ENCODE measurements at regions of chr17 and their contacts with region 1.

Region 1: DNA sequence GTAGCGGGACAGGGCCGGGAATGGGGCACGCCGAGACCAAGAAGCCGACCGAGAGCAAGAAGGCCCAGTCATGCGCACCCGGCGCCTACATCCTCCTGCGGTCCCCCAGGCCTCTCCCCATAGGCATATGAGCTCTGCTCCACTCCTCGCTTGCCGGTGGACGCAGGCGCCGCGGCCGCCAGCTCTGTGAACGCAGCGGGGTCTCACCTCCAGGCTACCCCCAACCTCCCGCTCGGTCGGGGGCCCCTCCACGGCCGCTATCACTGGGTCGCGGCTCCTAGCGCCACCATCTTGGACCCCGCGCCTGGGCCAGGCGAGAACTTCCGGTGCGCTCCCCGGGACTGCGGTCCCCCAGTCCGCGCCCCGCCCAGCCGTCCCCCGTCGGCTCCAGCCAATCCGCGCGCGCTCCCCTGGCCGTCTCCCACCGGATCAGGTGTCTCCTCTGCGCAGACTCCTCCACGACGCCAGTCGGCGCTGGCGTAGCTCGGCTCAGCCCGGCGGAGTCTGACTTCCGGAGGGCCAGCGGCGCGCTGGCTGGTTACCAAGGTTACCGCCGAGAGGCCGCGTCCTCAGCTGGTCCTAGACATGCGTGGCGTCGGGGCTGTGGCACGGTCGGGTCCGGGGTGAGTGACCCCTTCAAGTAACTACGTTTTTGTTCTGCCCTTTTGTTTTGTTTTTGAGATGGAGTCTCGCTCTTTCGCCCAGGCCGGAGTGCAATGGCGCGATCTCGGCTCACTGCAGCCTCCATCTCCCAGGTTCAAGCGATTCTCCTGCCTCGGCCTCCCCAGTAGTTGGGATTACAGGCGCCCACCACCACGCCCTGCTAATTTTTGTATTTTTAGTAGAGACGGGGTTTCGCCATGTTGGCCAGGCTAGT is at the start of gene ZNF594:
- DNase-seq: peak; percentile 96 to 98
- ATAC-seq: peak; percentile 99 to 100 (median 100)
- H3K4me3 ChIP-seq: peak within 1 kb of the TSS; percentile 71 to 95 (median 90)
- H3K27ac ChIP-seq: peak within 1 kb of the TSS; percentile 24 to 89 (median 83)
- H3K4me1 ChIP-seq: peaks cover 0 to 26% (median 19%) of the 10 kb centered on the region in 9 donors
- H3K27me3 ChIP-seq: no peaks in the 10 kb centered on the region
- CTCF ChIP-seq: peak; percentile 50 to 91 (median 80)
- total RNA-seq, gene ZNF594: 4.0 to 9.1 (median 6.7) TPM

Region 2: DNA sequence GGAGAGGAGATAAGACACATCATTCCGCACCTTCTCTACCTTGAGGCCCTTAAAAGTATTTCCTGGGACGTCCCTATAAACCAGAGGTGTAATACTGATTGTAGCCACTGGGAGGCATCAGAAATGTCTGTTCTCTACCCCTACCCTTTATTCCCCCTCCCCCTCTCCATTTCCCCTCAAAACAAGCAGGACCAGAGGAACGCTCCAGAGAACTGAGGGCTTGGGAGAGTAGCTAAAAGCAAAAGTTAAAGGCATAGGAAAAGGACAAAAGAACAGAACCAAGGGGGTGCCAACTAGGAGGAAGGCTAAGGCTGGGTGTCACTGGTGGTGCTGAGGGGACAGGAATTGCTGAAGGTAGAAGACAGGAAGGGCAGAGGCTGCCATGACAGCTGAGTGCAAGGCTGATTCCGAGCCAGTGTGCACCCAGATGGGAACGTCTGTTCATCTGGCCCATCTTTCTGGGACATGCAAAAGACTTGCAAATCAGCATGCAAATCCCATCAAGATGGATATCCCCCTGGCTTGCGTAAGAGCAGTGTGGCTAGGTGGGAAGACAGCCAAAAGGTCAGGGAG is 211.0 kb before region 1 on chr17:
- intact Hi-C with region 1: no loop called
- DNase-seq: no peak
- ATAC-seq: peak; percentile 15 to 65 (median 54)
- H3K4me3 ChIP-seq: no peak overlapping the region
- H3K27ac ChIP-seq: peak overlapping the region in 1 of 10 donors; percentile 78
- H3K4me1 ChIP-seq: peaks cover 0 to 50% (median 6%) of the 10 kb centered on the region in 9 donors
- H3K27me3 ChIP-seq: no peaks in the 10 kb centered on the region
- CTCF ChIP-seq: peak; percentile 61 to 78 (median 74)

Region 3: GRCh38 chr17:5111402-5112204 is 80.2 kb before region 1 on chr17 and contains the start of gene ZNF232:
- intact Hi-C with region 1: loop called in 3 of 10 experiments (anchors 5 kb)
- DNase-seq: peak; percentile 94 to 96
- ATAC-seq: peak; percentile 95 to 98 (median 96)
- H3K4me3 ChIP-seq: peak within 1 kb of the TSS; percentile 58 to 97 (median 82)
- H3K27ac ChIP-seq: peak within 1 kb of the TSS in 9 of 10 donors; percentile 47 to 85 (median 78)
- H3K4me1 ChIP-seq: peaks cover 0 to 25% (median 9%) of the 10 kb centered on the region in 9 donors
- H3K27me3 ChIP-seq: peaks cover 0 to 21% (median 16%) of the 10 kb centered on the region in 7 donors
- CTCF ChIP-seq: peak in 2 of 9 donors; percentile 9 to 10
- total RNA-seq, gene ZNF232: 2.1 to 5.8 (median 4.4) TPM

Region 4: GRCh38 chr17:5210614-5211252 is 19.0 kb after region 1 on chr17:
- intact Hi-C with region 1: no loop called
- DNase-seq: no peak
- ATAC-seq: peak in 2 of 8 donors; percentile 11 to 51
- H3K4me3 ChIP-seq: no peak overlapping the region
- H3K27ac ChIP-seq: peak overlapping the region in 2 of 10 donors; percentile 25 to 68
- H3K4me1 ChIP-seq: peaks cover 0 to 23% (median 0%) of the 10 kb centered on the region in 9 donors
- H3K27me3 ChIP-seq: no peaks in the 10 kb centered on the region
- CTCF ChIP-seq: no peak

Region 5: GRCh38 chr17:5281814-5282653 is 90.3 kb after region 1 on chr17 and contains the start of gene RABEP1:
- intact Hi-C with region 1: loop called in 1 of 10 experiments (anchors 5 kb)
- DNase-seq: peak; percentile 95 to 96
- ATAC-seq: peak; percentile 94 to 98 (median 96)
- H3K4me3 ChIP-seq: peak within 1 kb of the TSS; percentile 40 to 91 (median 78)
- H3K27ac ChIP-seq: peak within 1 kb of the TSS; percentile 67 to 96 (median 95)
- H3K4me1 ChIP-seq: peaks cover 0 to 42% (median 32%) of the 10 kb centered on the region in 9 donors
- H3K27me3 ChIP-seq: no peaks in the 10 kb centered on the region
- CTCF ChIP-seq: peak in 6 of 9 donors; percentile 7 to 33 (median 15)
- total RNA-seq, gene RABEP1: 51.3 to 69.1 (median 57.6) TPM